Activated CD4-positive, alpha-beta T cell treated with anti-CD3 and anti-CD28 coated beads, Interleukin-2, amount 10 ng/mL, durations not matched to agents 24 days and 14 days (primary cell): ENCODE measurements at regions of chr20 and their contacts with region 1.

Region 1: GRCh38 chr20:59120491-59120890 is 43.1 kb upstream of the ZNF831 start:
- DNase-seq: peak; percentile 75
- H3K4me3 Mint-ChIP-seq: peak overlapping the region; percentile 6
- H3K27ac Mint-ChIP-seq: peak overlapping the region; percentile 10
- H3K4me1 Mint-ChIP-seq: peaks cover 52% of the 10 kb centered on the region
- H3K27me3 Mint-ChIP-seq: peaks cover 3% of the 10 kb centered on the region

Region 2: DNA sequence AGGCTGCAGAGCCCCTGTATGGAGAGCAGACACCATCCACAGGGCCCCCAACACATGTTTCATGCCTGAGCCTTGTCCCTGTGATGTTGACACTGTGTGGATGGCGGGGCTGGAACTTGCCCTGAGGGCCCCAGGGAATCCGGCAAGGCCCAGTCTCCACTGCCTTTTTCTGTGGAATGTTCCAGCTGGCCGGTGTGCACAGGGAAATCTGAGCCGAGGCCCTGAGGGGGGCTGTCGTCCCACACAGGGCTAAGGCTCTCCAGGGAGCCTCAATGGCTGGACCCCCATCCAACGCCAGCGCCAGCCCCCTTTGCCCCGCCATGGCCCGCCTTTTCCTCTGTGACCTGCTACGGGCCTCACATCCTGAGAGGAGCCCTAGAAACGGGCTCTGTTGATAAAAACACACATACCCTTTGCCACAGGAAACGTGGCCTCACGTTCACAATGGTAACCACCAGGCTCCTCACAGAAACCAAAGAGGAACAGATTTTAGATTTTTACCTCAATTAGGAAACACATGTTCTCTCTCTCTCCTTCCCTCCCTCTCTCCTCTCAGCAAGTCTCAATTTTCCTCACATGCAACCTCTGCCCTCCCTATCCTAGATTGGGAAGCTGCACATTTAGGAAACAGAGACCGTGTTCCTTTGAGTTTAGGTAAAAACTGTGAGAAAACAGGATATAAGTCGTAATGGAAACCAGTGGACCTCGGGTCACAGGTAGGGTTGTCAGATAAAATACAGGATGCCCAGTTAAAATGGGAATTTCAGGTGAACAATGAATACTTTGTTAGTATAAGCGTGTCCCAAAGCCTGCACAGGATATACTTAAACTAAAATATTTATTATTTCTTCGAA is 29.4 kb after region 1 on chr20:
- intact Hi-C with region 1: loop called (anchors 1 kb)
- DNase-seq: peak; percentile 94
- H3K4me3 Mint-ChIP-seq: peak overlapping the region; percentile 64
- H3K27ac Mint-ChIP-seq: peak overlapping the region; percentile 89
- H3K4me1 Mint-ChIP-seq: peaks cover 72% of the 10 kb centered on the region
- H3K27me3 Mint-ChIP-seq: no peaks in the 10 kb centered on the region

Region 3: GRCh38 chr20:59165891-59166709 is 45.6 kb after region 1 on chr20:
- intact Hi-C with region 1: loop called (anchors 1 kb)
- DNase-seq: peak; percentile 75
- H3K4me3 Mint-ChIP-seq: peak overlapping the region; percentile 87
- H3K27ac Mint-ChIP-seq: peak overlapping the region; percentile 88
- H3K4me1 Mint-ChIP-seq: peaks cover 73% of the 10 kb centered on the region
- H3K27me3 Mint-ChIP-seq: no peaks in the 10 kb centered on the region

Region 4: DNA sequence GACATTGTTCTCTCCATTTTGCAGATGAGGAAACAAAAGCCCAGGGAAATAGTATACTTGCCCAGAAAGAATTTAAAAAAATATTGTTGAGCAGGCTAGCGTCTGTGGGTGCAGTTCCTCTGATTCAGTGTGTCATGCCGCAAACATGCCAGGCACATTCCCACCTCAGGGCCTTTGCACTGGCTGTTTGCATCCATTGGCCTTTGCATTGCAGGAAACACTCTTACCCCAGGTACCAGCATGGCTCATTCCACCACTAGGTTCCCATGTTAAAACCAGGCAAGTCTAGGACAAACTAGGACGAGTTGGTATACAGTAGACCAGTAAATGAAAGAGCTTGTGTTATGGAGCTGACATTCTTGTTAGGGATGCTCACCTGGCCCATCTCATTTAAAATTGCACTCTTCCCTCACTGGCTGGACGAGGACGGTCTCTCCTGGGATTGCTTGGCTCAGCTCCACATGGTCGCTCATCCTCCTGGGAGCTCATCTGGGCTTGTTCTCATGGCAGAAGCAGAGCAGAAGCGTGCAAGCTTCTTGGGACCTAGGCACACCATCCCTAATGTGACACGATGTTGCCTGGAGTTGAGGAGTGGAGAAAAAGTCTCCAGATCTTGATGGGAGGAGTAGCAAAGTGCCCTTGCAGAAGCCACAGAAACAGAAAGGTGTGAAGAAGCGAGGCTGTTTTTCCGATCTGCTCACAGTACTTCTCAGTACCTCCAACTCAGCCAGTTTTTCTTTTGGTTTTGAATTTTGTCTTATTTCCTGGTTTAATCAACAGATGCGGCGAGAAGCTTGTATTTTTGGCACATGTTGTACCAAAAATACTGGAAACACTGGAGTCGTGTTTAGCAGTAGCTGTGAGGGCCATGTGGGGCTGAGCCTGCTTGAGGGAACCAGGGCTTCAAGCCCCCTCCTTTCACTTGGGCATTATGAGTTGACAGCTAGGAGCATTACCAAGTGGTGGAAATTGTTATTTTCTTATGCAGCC is 57.1 kb after region 1 on chr20:
- intact Hi-C with region 1: loop called (anchors 2 kb)
- DNase-seq: peak; percentile 83
- H3K4me3 Mint-ChIP-seq: peak overlapping the region; percentile 63
- H3K27ac Mint-ChIP-seq: peak overlapping the region; percentile 95
- H3K4me1 Mint-ChIP-seq: peaks cover 60% of the 10 kb centered on the region
- H3K27me3 Mint-ChIP-seq: peaks cover 1% of the 10 kb centered on the region

Region 5: DNA sequence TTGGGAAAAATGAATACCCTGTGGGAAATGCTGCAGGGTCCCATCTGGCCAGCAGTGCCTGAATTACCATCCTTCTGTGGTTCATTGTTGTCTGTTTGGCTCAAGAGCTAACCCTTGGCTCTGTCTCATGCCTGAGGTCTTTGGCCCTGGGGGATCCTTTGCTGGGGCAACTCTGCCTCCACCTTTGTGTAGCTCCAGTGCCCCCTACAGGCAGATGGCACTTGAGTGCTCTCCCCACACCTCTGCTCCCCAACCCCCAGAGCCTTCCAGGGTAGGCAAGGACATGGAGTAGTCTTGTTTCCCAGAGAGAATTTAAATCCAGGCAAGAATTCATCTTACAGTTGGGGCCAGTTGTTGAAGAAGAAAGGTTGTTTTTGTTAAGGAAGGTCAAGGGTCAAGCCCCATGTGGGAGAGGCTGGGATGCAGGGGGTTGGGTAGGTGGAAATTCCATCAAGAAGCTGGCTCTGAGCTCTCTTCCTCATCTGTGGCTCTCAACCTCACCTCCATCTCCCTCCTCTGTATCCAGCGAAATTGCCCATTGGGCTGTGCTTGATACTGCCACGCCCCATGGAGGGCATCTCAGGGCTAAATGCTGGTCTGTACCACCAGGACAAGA is 87.4 kb after region 1 on chr20:
- intact Hi-C with region 1: loop called (anchors 10 kb)
- DNase-seq: peak; percentile 93
- H3K4me3 Mint-ChIP-seq: no peak overlapping the region
- H3K27ac Mint-ChIP-seq: no peak overlapping the region
- H3K4me1 Mint-ChIP-seq: peaks cover 4% of the 10 kb centered on the region
- H3K27me3 Mint-ChIP-seq: no peaks in the 10 kb centered on the region

Region 6: DNA sequence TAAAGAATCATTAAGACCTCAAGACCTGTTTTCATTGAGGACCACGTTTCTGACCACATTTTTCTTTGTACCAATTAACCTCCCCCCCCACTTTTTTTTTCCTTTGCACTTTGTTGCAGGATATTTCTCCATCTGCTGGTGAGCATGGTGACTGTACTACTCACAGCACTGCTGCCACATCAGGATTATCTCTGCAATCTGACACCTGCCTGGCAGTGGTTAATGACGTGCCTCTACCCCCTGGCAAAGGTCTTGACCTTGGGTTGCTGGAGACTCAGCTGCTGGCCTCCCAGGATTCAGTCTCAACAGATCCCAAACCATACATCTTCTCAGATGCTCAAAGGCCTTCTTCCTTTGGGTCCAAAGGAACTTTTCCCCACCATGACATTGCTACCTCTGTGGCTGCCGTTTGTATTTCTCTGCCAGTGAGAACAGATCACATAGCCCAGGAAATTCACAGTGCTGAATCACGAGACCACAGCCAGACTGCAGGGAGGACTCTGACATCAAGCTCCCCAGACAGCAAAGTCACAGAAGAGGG is 133.4 kb after region 1 on chr20:
- intact Hi-C with region 1: loop called (anchors 5 kb)
- DNase-seq: peak; percentile 78
- H3K4me3 Mint-ChIP-seq: peak overlapping the region; percentile 75
- H3K27ac Mint-ChIP-seq: peak overlapping the region; percentile 93
- H3K4me1 Mint-ChIP-seq: peaks cover 45% of the 10 kb centered on the region
- H3K27me3 Mint-ChIP-seq: no peaks in the 10 kb centered on the region

Region 7: DNA sequence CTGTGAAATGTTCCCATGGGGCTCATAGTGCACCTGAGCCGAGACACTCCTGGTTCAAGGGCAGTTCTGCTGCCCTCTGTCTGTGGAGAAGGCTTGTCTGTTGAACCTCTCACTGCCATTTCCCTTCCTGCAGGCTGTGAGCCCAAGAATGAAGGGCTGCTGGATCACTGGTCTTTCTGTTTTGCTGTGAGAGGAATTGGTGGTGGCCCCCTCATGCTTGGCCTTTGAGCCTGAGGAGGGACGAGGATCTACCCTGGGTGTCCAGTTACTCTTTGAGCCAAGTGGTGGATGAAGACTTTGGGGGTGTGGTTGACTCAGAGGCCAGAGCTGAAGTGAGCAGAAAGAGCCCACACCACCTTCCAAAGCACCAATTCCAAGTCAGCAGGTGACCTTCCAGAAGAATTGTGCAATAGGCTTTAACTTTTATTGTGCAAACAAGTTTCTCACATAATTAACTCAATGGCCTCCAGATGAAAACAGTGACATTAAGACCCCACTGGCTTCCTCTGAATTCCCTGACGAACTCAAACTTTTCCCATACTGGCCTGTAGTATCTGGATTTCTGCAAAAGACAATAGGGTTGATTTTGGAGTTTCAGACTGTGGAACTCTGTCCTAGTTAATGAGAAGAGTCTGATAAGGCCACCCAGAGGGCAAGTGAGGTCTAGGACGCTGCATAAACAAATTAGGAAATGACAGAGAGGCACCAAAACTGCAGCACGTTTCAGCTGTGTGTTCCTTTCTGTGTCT is 585.3 kb after region 1 on chr20:
- intact Hi-C with region 1: no loop called
- DNase-seq: no peak
- H3K4me3 Mint-ChIP-seq: no peak overlapping the region
- H3K27ac Mint-ChIP-seq: no peak overlapping the region
- H3K4me1 Mint-ChIP-seq: no peaks in the 10 kb centered on the region
- H3K27me3 Mint-ChIP-seq: peaks cover 4% of the 10 kb centered on the region